Panc1 (cell line): ENCODE measurements at regions of chr20 and their contacts with region 1.

Region 1: GRCh38 chr20:53692413-53693067 is 98.9 kb upstream of the ZNF217 start:
- DNase-seq: no peak
- ATAC-seq: peak; percentile 82
- H3K4me3 ChIP-seq: no peak overlapping the region
- H3K27ac ChIP-seq: peak overlapping the region; percentile 85
- H3K4me1 ChIP-seq: peaks cover 28% of the 10 kb centered on the region
- H3K27me3 ChIP-seq: no peaks in the 10 kb centered on the region
- CTCF ChIP-seq: no peak

Region 2: DNA sequence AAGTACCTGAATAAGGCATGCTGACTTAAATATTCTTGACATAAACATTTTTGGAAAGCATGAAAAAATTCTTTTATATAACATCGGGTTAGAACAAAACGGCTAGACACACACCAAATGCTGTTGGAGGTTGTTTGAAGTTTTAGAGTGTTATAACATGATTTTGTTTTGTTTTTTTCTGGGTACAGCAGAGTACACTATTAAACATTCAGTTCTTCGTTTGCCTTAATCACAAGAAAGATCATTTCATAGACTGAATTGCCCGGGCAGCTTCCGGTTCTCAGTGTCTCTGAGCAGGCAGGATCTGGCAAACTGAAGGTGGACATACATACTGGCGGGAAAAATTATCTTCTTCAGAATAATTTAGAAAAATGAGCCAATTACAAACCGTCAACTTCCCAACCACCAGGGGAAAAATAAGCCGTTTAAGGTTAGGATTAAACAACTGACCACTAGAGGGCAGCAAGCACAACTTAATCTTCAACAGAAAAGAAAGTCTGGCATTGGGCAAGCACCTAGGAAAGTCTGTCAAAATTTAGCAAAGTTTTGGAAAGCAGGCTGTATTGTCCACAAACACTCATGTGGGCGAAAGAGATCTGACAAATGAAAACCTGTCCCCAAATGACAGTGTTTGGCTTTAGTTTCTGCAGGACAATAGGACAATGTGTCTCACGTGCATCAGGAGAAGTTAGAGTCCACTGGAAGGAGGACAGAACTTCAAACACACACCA is 113.9 kb before region 1 on chr20:
- CTCF ChIA-PET with region 1: no interaction called
- POLR2A ChIA-PET with region 1: no interaction called
- in situ Hi-C with region 1: no loop called
- intact Hi-C with region 1: no loop called
- DNase-seq: no peak
- ATAC-seq: peak; percentile 27
- H3K4me3 ChIP-seq: peak overlapping the region; percentile 57 to 66
- H3K27ac ChIP-seq: peak overlapping the region; percentile 100
- H3K4me1 ChIP-seq: peaks cover 69% of the 10 kb centered on the region
- H3K27me3 ChIP-seq: no peaks in the 10 kb centered on the region
- CTCF ChIP-seq: peak; percentile 82

Region 3: DNA sequence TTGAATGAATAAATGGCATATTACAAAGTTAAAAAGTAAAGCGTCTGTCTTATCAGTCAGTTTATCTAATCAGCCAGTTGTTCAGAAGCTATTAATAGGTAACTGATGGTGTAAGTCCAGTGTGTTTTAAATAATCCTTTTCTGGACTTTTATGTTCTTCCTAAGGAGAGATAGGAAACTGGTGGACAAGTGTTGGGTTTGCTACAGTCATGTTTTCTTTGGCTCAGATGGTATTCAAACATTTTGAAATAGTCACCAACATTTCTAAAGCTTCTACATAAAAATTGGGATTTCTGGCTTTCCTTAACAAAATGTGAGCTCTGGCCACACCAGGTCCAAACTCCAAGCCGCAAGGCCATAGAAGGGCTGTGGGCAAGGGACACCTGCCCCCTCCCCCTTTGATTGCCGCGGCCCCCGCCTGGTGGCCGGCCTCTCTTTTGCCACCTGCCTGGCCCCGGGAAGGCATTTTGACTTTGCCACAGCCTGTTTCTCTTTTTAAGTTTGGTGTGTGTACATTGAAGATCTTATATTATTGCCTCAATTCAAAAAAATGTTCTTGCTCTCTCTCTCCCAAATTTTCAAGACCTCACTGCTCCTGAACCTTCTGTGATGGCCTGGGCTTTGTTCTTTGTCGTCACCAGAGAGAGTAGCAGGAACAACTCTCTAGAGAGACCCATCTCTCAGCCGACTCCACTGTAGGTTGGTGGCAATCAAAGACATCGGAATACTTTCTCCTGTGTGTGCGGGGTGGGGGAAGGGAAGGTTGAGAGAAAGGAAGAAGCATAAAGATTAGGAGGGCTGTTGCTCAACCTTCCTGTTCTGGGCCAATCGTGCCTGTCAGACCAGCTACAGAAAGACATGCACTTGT is 14.9 kb before region 1 on chr20:
- CTCF ChIA-PET with region 1: interaction called, 3 read pairs
- POLR2A ChIA-PET with region 1: interaction called, 13 read pairs
- in situ Hi-C with region 1: no loop called
- intact Hi-C with region 1: no loop called
- DNase-seq: no peak
- ATAC-seq: peak; percentile 86
- H3K4me3 ChIP-seq: peak overlapping the region in 1 of 2 experiments; percentile 32; a peak in 2 of 4 replicates
- H3K27ac ChIP-seq: peak overlapping the region; percentile 98
- H3K4me1 ChIP-seq: peaks cover 46% of the 10 kb centered on the region
- H3K27me3 ChIP-seq: no peaks in the 10 kb centered on the region
- CTCF ChIP-seq: no peak

Region 4: DNA sequence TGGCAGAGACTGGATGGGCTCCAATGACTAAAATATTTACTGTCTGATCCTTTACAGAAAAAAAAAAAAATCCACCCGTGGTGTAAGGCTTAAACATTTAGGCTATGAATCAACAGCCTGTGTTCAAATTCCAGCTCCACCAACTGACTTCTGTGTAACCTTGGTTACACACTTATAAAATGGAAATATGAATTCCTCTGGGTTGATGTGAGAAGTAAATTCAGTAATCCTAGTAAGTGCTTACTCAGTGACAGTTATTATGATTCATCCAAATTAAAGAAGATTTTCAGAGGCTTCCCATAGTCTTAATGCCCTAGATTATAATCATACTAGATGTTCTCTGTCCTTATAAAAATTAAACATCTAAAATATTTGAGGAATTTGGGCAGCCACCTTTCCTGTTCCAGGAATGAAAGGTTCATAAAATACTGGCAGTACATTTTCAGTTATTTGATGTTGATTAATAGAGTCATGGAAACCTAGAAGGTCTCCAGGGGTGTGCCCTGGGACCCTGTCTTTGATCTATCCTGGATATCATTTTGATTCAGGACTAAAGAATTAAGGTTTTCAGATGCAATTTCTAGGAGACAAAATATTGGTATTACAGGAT is 81.4 kb after region 1 on chr20:
- CTCF ChIA-PET with region 1: no interaction called
- POLR2A ChIA-PET with region 1: interaction called, 10 read pairs
- in situ Hi-C with region 1: no loop called
- intact Hi-C with region 1: no loop called
- DNase-seq: peak; percentile 81
- ATAC-seq: peak; percentile 86
- H3K4me3 ChIP-seq: no peak overlapping the region
- H3K27ac ChIP-seq: peak overlapping the region; percentile 100
- H3K4me1 ChIP-seq: peaks cover 46% of the 10 kb centered on the region
- H3K27me3 ChIP-seq: no peaks in the 10 kb centered on the region
- CTCF ChIP-seq: no peak